Dorsolateral prefrontal cortex (tissue), 120 donors: ENCODE measurements at regions of chr11 and their contacts with region 1.

Region 1: DNA sequence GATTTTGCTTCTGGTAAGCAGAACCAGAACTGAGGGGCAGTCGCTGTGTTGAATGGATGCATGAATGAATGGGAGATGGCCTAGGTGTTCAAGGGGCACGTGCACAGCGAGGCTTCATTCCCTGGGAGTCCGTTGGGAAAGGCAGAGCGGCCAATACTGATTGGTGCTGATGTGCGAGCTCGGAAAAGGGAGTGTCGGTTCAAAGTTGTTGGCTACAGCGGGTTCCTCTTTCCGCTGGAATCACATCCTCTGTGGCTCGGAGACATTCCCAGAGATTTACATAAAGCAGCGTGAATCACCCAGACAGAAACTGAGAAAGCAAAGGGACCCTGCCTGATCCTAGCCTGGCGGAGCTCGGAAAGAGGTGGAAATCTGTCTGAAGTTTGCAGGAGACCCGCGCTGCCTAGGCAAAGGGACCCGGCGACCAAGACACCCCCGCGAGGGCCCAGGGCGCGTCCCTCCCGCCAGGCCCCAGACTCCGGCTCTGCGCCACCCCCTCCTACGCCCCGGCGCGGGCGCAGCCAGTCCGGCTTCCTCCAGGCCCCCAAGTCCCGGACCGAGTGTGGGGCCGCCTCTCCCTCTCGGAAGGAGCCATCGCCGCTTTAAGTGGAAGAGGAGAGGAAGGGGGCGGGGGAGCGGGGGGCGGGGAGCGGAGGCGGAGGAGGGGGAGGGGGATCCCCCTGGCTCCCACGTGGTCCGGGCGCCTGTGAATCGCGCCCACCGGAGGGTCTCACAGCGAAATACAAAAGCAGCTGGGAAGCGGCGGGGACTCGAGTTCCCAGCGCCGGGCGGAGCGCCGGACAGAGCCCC is at the start of gene FJX1:
- DNase-seq: peak in 8 of 10 donors; percentile 30 to 60 (median 42)
- H3K4me3 ChIP-seq: peak within 1 kb of the TSS; percentile 53 to 83 (median 71)
- H3K27ac ChIP-seq: peak within 1 kb of the TSS in 58 of 59 donors; percentile 16 to 87 (median 77)
- H3K27me3 ChIP-seq: no peaks in the 10 kb centered on the region
- CTCF ChIP-seq: peak in 2 of 56 donors; percentile 3 to 8
- total RNA-seq, gene FJX1: 4.2 to 34.9 (median 12.1) TPM

Region 2: DNA sequence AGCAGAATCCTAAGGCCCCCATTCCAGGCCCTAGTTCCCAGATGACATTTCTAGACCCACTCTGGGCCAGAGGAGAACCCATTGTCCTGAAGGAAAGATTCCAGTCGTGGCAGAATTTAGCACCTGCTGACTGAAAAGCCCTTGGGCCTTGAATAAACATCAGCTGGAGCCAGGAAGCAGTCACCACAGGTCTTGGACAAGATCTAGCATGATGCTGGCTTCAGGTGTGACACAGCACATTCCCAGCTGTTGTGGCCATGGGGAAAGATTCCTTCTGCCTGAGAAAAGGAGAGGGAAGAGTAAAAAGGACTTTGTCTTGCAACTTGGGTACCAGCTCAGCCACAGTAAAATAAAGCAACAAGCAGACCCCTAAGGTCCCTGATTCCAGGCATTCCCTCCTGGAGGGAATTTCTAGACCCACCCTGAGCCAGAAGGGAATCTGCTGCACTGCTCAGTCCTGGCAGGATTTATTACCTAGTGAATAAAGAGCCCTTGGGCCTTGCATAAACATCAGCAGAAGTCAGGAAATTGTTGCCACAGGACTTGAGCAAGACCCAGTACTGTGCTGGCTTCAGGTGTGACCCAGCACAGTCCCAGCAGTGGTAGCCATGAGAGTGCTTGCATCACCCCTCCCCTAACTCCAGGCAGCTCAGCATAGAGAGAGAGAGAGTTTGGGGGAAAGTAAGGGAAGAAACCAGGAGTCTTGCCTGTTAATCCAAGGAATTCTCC is 50.0 kb before region 1 on chr11:
- intact Hi-C with region 1: no loop called
- DNase-seq: no peak
- H3K4me3 ChIP-seq: no peak overlapping the region
- H3K27ac ChIP-seq: no peak overlapping the region
- H3K27me3 ChIP-seq: no peaks in the 10 kb centered on the region
- CTCF ChIP-seq: no peak

Region 3: GRCh38 chr11:35702126-35702525 is 84.2 kb after region 1 on chr11:
- intact Hi-C with region 1: no loop called
- DNase-seq: no peak
- H3K4me3 ChIP-seq: no peak overlapping the region
- H3K27ac ChIP-seq: no peak overlapping the region
- H3K27me3 ChIP-seq: no peaks in the 10 kb centered on the region
- CTCF ChIP-seq: no peak

Region 4: GRCh38 chr11:35822815-35823495 is 205.1 kb after region 1 on chr11:
- intact Hi-C with region 1: loop called (anchors 1 to 2 kb)
- DNase-seq: no peak
- H3K4me3 ChIP-seq: no peak overlapping the region
- H3K27ac ChIP-seq: peak overlapping the region in 15 of 59 donors; percentile 4 to 88 (median 78)
- H3K27me3 ChIP-seq: no peaks in the 10 kb centered on the region
- CTCF ChIP-seq: no peak

Region 5: GRCh38 chr11:36015799-36016198 is 397.9 kb after region 1 on chr11:
- intact Hi-C with region 1: loop called in 1 of 2 experiments (anchors 5 kb)
- DNase-seq: peak in 6 of 10 donors; percentile 32 to 87 (median 51)
- H3K4me3 ChIP-seq: peak overlapping the region in 1 of 59 donors; percentile 8
- H3K27ac ChIP-seq: peak overlapping the region in 13 of 59 donors; percentile 5 to 72 (median 41)
- H3K27me3 ChIP-seq: no peaks in the 10 kb centered on the region
- CTCF ChIP-seq: no peak

Region 6: GRCh38 chr11:36258730-36259360 is 641.0 kb after region 1 on chr11:
- intact Hi-C with region 1: loop called in 1 of 2 experiments (anchors 5 kb)
- DNase-seq: peak in 9 of 10 donors; percentile 41 to 75 (median 65)
- H3K4me3 ChIP-seq: peak overlapping the region in 1 of 59 donors; percentile 11
- H3K27ac ChIP-seq: peak overlapping the region in 1 of 59 donors; percentile 18
- H3K27me3 ChIP-seq: no peaks in the 10 kb centered on the region
- CTCF ChIP-seq: peak in 55 of 56 donors; percentile 36 to 82 (median 69)

Region 7: GRCh38 chr11:36478700-36479329 is 860.9 kb after region 1 on chr11:
- intact Hi-C with region 1: loop called in 1 of 2 experiments (anchors 10 kb)
- DNase-seq: peak in 3 of 10 donors; percentile 25 to 71 (median 61)
- H3K4me3 ChIP-seq: no peak overlapping the region
- H3K27ac ChIP-seq: peak overlapping the region in 21 of 59 donors; percentile 1 to 70 (median 27)
- H3K27me3 ChIP-seq: no peaks in the 10 kb centered on the region
- CTCF ChIP-seq: peak in 55 of 56 donors; percentile 53 to 90 (median 76)